K562 (cell line): ENCODE measurements at regions of chr7 and their contacts with region 1.

Region 1: GRCh38 chr7:112770084-112770483 is 20.1 kb downstream of the TMEM168 start:
- DNase-seq: no peak
- ATAC-seq: no peak
- H3K4me3 ChIP-seq: no peak overlapping the region
- H3K27ac ChIP-seq: no peak overlapping the region
- H3K4me1 ChIP-seq: no peaks in the 10 kb centered on the region
- H3K27me3 ChIP-seq: no peaks in the 10 kb centered on the region
- CTCF ChIP-seq: no peak
- EP300 ChIP-seq: no peak
- POLR2A ChIP-seq: no peak
- RAD21 ChIP-seq: no peak

Region 2: GRCh38 chr7:112759905-112760304 is 10.2 kb before region 1 on chr7:
- CTCF ChIA-PET with region 1: no interaction called
- POLR2A ChIA-PET with region 1: interaction called, 12 read pairs
- in situ Hi-C with region 1: no loop called
- intact Hi-C with region 1: no loop called
- DNase-seq: no peak
- ATAC-seq: no peak; the same call in 2 of the 3 replicates
- H3K4me3 ChIP-seq: no peak overlapping the region
- H3K27ac ChIP-seq: no peak overlapping the region
- H3K4me1 ChIP-seq: no peaks in the 10 kb centered on the region
- H3K27me3 ChIP-seq: no peaks in the 10 kb centered on the region
- CTCF ChIP-seq: no peak
- EP300 ChIP-seq: no peak
- POLR2A ChIP-seq: no peak
- RAD21 ChIP-seq: no peak